ENCODE measurements at regions of chr1 and their contacts with region 1.

Region 1: DNA sequence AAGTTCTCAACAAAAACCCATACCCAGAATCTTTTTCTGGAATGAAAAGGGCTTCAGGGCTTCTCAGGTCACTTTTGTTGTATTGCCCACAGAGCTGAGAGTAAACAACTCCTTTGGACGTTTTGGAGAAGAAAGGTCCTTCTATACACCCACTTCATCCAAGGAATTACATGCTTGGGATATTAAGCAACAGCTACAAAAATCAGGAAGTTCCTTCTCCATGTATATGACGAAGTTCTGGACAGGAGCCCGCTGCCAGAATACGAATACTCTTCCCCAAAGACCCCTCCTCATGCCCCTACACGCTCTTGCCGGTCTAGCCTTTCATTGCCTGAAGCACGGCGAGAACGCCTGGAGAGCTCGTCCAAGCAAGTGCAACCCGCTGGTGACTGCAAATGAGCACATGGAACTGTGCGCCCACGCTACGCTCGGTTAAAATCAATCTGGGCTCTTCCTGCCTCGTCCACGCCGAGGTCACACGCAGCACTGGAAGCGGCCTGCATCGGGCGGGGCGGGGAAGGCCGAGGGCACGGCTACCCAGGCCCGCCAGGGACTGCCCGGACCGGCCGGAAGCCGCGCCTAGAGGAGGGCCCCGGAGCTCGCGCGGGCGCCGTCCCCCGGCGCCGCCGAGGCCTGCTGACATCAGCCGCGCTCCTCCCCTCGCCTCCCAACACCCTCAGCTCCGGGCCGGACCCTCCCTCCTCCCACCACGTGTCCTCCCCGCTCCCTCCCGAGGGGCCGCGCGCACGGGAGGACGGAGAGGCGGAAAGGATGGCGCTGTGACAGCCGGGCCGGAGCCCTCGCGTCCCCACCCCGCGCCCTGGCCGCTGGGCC is at the start of gene POGK:
- DNase-seq: peak; percentile 68 to 87 (median 76)
- ATAC-seq: peak; percentile 89 to 91
- H3K4me3 Mint-ChIP-seq: peak within 1 kb of the TSS; percentile 84 to 96 (median 92)
- H3K27ac Mint-ChIP-seq: peak within 1 kb of the TSS; percentile 95 to 99 (median 98)
- H3K4me1 Mint-ChIP-seq: peaks cover 31 to 53% (median 46%) of the 10 kb centered on the region in 4 donors
- H3K27me3 Mint-ChIP-seq: no peaks in the 10 kb centered on the region
- polyA plus RNA-seq, gene POGK: 13.9 to 23.0 (median 15.1) TPM

Region 2: GRCh38 chr1:166721145-166721544 is 117.8 kb before region 1 on chr1:
- POLR2A ChIA-PET with region 1: no interaction called
- DNase-seq: no peak
- ATAC-seq: no peak
- H3K4me3 Mint-ChIP-seq: no peak overlapping the region
- H3K27ac Mint-ChIP-seq: no peak overlapping the region
- H3K4me1 Mint-ChIP-seq: no peaks in the 10 kb centered on the region
- H3K27me3 Mint-ChIP-seq: peaks cover 2 to 14% (median 5%) of the 10 kb centered on the region in 5 donors

Region 3: GRCh38 chr1:166875734-166876539 is 37.0 kb after region 1 on chr1 and contains the start of gene TADA1:
- POLR2A ChIA-PET with region 1: interaction called, 35 read pairs
- DNase-seq: peak; percentile 93 to 98 (median 97)
- ATAC-seq: peak; percentile 88
- H3K4me3 Mint-ChIP-seq: peak within 1 kb of the TSS; percentile 83 to 99 (median 98)
- H3K27ac Mint-ChIP-seq: peak within 1 kb of the TSS; percentile 93 to 99 (median 98)
- H3K4me1 Mint-ChIP-seq: peaks cover 16 to 58% (median 53%) of the 10 kb centered on the region in 4 donors
- H3K27me3 Mint-ChIP-seq: no peaks in the 10 kb centered on the region
- polyA plus RNA-seq, gene TADA1: 12.8 to 15.1 (median 15.0) TPM